A549 (cell line): ENCODE measurements at regions of chr11 and their contacts with region 1.

Region 1: DNA sequence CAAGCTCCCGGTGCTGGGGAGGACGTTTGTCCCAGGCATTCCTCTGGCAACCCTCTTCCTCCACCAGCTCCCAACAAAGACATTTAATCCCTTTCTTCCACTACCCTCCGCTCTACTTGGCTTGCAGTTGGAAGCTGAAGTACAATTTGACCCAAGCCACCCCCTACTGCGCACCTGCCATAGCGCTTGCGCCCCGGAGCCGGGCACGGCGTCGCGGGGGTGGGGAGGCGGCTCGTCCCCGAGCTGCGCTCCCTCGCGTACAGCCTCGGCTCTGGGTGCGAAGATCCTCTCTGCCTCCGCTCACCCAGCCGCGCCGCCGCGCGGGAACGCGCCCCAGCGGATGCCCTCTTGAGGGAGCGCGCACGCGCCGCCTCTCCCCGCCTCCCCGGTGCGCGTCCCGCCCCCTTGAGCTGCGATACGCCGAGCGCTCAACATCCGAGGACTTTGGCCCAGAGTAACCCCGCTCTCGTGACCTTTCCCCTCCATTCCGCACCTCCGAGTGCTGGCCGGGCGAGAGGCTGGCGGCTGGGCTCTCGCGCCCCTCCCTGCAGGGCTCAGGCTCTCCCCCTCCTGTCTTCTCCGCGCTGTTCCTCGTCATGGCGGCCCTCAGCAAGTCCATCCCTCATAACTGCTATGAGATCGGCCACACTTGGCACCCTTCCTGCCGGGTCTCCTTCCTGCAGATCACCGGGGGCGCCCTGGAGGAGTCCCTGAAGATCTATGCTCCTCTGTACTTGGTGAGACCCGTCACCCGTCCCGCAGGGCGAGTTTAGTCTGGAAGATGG is at the start of gene TMEM135:
- DNase-seq: peak; percentile 95 to 96
- ATAC-seq: peak; percentile 92 to 97
- H3K4me3 ChIP-seq: peak within 1 kb of the TSS; percentile 94
- H3K27ac ChIP-seq: peak within 1 kb of the TSS; percentile 94
- H3K4me1 ChIP-seq: peaks cover 25% of the 10 kb centered on the region
- CTCF ChIP-seq: no peak
- EP300 ChIP-seq: no peak
- POLR2A ChIP-seq: peak; percentile 62
- RAD21 ChIP-seq: peak in 1 of 2 experiments; percentile 19; a peak in 2 of 5 replicates
- polyA plus RNA-seq, gene TMEM135: 17.7 and 18.4 TPM in 2 replicates

Region 2: DNA sequence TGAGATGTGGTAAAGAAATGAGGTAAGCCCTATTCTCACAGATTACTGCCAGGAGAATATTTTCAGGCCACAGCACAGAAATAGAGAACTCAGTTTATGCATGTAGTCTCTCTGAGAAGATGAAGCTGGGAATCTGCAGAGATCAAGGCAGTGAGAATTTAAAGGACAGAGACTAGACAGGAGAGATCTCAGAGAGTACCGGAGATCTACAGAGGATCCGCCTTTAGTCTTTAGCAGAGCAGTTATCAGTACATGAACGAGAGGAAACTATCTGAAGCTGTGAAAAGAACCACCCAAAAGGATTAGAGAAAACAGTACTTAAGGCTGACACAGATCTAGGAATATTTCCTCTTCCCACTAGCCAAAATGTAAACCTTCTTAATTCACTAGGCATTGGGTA is 1512.0 kb before region 1 on chr11:
- CTCF ChIA-PET with region 1: no interaction called
- POLR2A ChIA-PET with region 1: no interaction called
- DNase-seq: no peak
- ATAC-seq: no peak
- H3K4me3 ChIP-seq: no peak overlapping the region
- H3K27ac ChIP-seq: no peak overlapping the region
- H3K4me1 ChIP-seq: no peaks in the 10 kb centered on the region
- CTCF ChIP-seq: no peak
- EP300 ChIP-seq: no peak
- POLR2A ChIP-seq: no peak
- RAD21 ChIP-seq: no peak

Region 3: GRCh38 chr11:86955361-86956120 is 82.1 kb before region 1 on chr11 and contains the start of gene FZD4:
- CTCF ChIA-PET with region 1: interaction called, 3 read pairs
- POLR2A ChIA-PET with region 1: interaction called, 16 read pairs
- DNase-seq: peak; percentile 85 to 88
- ATAC-seq: peak; percentile 90 to 98
- H3K4me3 ChIP-seq: peak within 1 kb of the TSS; percentile 82
- H3K27ac ChIP-seq: peak within 1 kb of the TSS; percentile 78 to 92
- H3K4me1 ChIP-seq: peaks cover 9% of the 10 kb centered on the region; the same call in 1 of the 3 replicates
- CTCF ChIP-seq: peak; percentile 38; the same call in 2 of the 3 replicates
- EP300 ChIP-seq: no peak
- POLR2A ChIP-seq: no peak; the same call in 1 of the 2 replicates
- RAD21 ChIP-seq: peak; percentile 37 to 42; a peak in 3 of 5 replicates
- polyA plus RNA-seq, gene FZD4: 0.90 and 1.3 TPM in 2 replicates

Region 4: GRCh38 chr11:87005569-87005921 is 32.1 kb before region 1 on chr11:
- CTCF ChIA-PET with region 1: no interaction called
- POLR2A ChIA-PET with region 1: interaction called, 10 read pairs
- DNase-seq: no peak
- ATAC-seq: peak; percentile 62 to 63
- H3K4me3 ChIP-seq: peak overlapping the region; percentile 38
- H3K27ac ChIP-seq: peak overlapping the region; percentile 40 to 63
- H3K4me1 ChIP-seq: peaks cover 7% of the 10 kb centered on the region
- CTCF ChIP-seq: no peak
- EP300 ChIP-seq: no peak
- POLR2A ChIP-seq: no peak
- RAD21 ChIP-seq: no peak

Region 5: DNA sequence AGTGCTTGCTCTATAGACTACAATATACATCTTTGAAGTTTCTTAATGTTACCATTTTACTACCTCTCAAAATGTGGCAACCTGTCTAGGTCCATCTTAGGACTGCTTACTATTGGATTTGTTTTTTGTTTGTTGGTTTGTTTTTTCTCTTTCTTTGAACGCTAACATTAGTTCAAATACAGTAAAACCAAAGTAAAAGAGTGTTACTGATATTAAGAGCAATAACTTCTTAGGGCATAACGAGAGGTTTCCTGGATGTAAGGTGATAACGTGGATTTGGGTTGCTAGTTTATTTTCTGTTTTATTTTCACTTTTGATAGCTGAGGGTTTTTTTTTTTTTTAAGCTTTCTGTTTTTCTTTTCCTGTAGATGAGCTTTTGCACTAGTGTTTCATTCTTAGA is 43.7 kb after region 1 on chr11:
- CTCF ChIA-PET with region 1: no interaction called
- POLR2A ChIA-PET with region 1: no interaction called
- DNase-seq: no peak
- ATAC-seq: no peak
- H3K4me3 ChIP-seq: no peak overlapping the region
- H3K27ac ChIP-seq: no peak overlapping the region
- H3K4me1 ChIP-seq: no peaks in the 10 kb centered on the region
- CTCF ChIP-seq: no peak
- EP300 ChIP-seq: no peak
- POLR2A ChIP-seq: no peak
- RAD21 ChIP-seq: no peak

Region 6: DNA sequence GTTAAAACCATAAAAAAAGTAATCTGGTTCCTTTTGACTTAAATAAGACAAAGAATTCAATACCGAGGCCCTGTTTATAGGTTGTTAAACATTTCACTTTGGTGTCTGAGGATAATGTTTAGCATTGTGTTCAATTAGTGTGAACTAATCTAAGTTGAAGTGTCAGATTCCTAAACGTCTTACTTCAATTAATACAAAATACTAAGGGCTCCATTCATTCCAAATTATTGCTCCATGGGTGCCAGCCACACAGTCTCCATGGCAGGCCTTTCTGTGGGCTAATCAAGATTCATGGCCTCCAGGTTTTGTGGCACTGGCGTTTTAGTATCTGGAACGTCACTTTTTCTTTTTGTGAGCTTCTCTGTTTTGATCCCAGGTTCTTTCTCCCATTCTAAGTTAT is 89.5 kb after region 1 on chr11:
- CTCF ChIA-PET with region 1: no interaction called
- POLR2A ChIA-PET with region 1: no interaction called
- DNase-seq: no peak
- ATAC-seq: no peak
- H3K4me3 ChIP-seq: no peak overlapping the region
- H3K27ac ChIP-seq: no peak overlapping the region
- H3K4me1 ChIP-seq: peaks cover 27% of the 10 kb centered on the region
- CTCF ChIP-seq: no peak
- EP300 ChIP-seq: no peak
- POLR2A ChIP-seq: no peak
- RAD21 ChIP-seq: no peak